ENCODE measurements at regions of chr10 and their contacts with region 1.

Region 1: GRCh38 chr10:63374991-63375390 is 90.8 kb downstream of the JMJD1C start:
- DNase-seq: no peak
- H3K4me3 ChIP-seq: no peak overlapping the region
- CTCF ChIP-seq: no peak

Region 2: GRCh38 chr10:63275094-63275493 is 99.9 kb before region 1 on chr10:
- in situ Hi-C with region 1: loop called (anchors 5 kb)
- DNase-seq: no peak
- H3K4me3 ChIP-seq: no peak overlapping the region
- CTCF ChIP-seq: no peak

Region 3: GRCh38 chr10:63421591-63421990 is 46.6 kb after region 1 on chr10:
- in situ Hi-C with region 1: no loop called
- DNase-seq: no peak
- H3K4me3 ChIP-seq: no peak overlapping the region
- CTCF ChIP-seq: no peak

Measured in astrocyte of the cerebellum (primary cell).